AG04449 (cell line): ENCODE measurements at regions of chr22 and their contacts with region 1.

Region 1: GRCh38 chr22:20305931-20306645 is 13.8 kb downstream of the DGCR6L start:
- DNase-seq: no peak
- H3K4me3 ChIP-seq: no peak overlapping the region
- CTCF ChIP-seq: no peak

Region 2: GRCh38 chr22:20316223-20316843 is 10.2 kb after region 1 on chr22:
- CTCF ChIA-PET with region 1: interaction called, 16 read pairs
- POLR2A ChIA-PET with region 1: no interaction called
- DNase-seq: no peak
- H3K4me3 ChIP-seq: no peak overlapping the region
- CTCF ChIP-seq: no peak